T-cell (primary cell): ENCODE measurements at regions of chr1 and their contacts with region 1.

Region 1: GRCh38 chr1:101257500-101258325 is 20.9 kb downstream of the S1PR1 start:
- DNase-seq: peak in 25 of 35 experiments; percentile 12 to 65 (median 38)
- ATAC-seq: peak; percentile 69 to 74 (median 72)
- H3K4me3 ChIP-seq: no peak overlapping the region
- H3K4me3 Mint-ChIP-seq: peak overlapping the region in 2 of 3 donors; percentile 17 to 38
- H3K27ac ChIP-seq: peak overlapping the region; percentile 58
- H3K27ac Mint-ChIP-seq: peak overlapping the region; percentile 79 to 93
- H3K4me1 ChIP-seq: peaks cover 32 to 43% of the 10 kb centered on the region in 2 experiments
- H3K4me1 Mint-ChIP-seq: peaks cover 58 to 68% (median 63%) of the 10 kb centered on the region in 3 donors
- H3K27me3 ChIP-seq: no peaks in the 10 kb centered on the region
- H3K27me3 Mint-ChIP-seq: no peaks in the 10 kb centered on the region

Region 2: DNA sequence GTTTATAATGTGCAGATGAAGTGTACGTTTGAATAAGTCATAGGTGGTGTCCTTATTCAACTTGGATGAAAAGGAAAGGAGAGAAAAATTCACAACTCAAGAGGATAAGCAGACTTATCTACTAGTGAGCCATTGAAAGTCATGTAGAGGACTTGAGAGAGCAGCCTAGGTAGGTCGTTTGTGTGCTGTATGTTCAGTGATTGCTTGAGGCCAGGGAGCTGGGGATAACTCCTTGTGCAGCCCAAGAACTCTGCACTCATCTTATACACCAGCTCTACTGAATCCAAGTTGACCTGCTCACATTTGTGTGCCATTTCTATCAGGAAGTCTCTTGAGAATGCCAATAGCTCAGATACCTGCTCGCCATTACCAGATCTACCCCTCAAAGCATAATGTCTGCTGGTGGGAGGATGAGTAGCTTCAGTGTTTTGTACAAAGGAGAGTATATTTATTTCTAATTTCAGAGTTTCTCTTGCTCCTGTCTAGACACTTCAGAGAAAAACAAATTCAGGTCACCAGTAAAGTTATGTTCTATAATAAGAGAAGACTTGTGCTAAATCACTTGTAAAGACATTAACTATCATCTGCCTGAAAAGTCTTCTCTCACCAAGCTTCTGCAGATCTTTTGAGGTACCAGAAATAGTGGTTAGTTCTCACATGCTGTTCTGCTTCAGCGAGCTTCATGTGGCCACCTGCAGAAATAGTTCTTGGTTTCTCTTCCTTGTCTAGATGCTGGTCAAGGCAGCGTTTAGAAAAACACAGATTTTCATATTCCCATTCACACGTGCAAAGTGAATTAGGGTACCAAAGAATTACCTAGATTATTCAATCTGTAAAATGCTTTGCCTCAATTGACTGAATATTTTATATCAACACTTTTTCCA is 10.1 kb before region 1 on chr1:
- CTCF ChIA-PET with region 1: interaction called, 5 read pairs
- POLR2A ChIA-PET with region 1: interaction called, 8 to 11 read pairs
- DNase-seq: peak in 1 of 35 experiments; percentile 7
- ATAC-seq: peak in 3 of 4 experiments; percentile 26 to 39 (median 39)
- H3K4me3 ChIP-seq: no peak overlapping the region
- H3K4me3 Mint-ChIP-seq: peak overlapping the region in 1 of 3 donors; percentile 42
- H3K27ac ChIP-seq: peak overlapping the region; percentile 32
- H3K27ac Mint-ChIP-seq: peak overlapping the region; percentile 83 to 86
- H3K4me1 ChIP-seq: peaks cover 22 to 34% of the 10 kb centered on the region in 2 experiments
- H3K4me1 Mint-ChIP-seq: peaks cover 77 to 79% (median 79%) of the 10 kb centered on the region in 3 donors
- H3K27me3 ChIP-seq: no peaks in the 10 kb centered on the region
- H3K27me3 Mint-ChIP-seq: no peaks in the 10 kb centered on the region